GM10248 (cell line): ENCODE measurements at regions of chr20 and their contacts with region 1.

Region 1: DNA sequence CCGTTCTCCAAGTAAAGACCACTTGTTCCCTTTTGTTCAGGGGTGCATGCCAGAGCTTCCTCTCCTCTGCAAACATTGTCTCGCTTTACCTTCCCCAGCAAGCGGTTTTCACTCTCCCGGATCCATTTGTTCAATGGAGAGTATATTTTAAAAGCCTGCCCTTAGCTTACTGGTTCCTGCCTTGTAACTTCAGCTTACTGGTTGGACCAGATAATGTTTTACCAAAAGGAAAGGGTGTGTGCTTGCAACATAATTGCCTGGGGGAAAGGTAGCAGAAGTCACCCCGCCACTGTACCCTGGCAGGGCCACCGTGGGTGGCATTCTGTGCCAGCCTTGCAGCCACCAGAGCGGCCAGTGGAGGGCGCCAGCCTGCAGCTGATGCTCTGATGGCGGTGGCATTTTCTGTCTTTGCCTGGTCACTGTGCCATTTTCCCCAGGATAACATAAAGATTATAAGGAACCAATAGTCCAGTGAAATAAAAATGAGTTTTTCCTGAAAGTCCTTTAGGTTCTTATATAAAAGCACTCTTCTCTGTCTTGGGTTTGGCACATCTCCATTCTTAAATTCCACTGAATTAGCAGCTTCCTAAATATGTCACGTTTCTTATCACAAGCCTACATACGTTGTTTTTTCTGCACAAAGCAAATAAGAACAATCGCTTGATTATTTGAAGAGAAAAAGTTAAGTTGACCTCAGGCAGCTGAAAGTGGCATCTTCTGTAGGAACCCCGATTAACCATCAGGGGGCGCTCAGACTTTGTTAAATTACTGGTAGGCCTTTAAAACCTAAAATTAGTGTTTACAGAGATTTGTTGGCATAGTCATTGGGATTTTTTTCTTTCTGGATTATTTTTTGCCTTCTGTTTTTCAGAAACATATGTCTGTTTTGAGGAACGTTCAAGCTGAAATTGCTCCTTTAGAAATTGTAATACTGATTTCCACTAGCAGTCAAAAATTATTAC is 67.4 kb upstream of the XRN2 start:
- DNase-seq: peak; percentile 59
- CTCF ChIP-seq: peak; percentile 91

Region 2: DNA sequence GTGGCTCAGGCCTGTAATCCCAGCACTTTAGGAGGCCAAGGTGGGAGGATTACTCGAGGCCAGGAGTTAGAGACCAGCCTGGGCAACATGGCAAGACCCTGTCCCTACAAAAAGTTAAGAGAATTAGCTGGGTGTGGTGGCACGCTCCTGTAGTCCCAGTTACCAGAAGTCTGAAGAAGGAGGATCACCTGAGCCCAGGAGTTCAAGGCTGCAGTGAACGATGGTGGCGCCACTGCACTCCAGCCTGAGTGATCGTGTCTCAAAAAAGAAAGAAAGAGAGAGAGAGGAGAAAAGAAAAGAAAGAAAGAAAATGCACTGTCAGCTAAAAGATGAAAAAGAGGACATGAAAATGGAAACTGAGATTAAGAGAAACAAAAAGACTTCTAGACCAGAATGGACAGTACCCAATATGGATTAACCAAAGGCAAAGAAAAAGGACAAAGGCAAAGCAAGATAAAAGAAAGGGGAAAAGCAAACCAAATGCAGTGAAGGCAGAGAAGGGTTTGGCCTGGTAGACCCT is 514.3 kb before region 1 on chr20:
- CTCF ChIA-PET with region 1: no interaction called
- POLR2A ChIA-PET with region 1: no interaction called
- DNase-seq: no peak
- CTCF ChIP-seq: no peak

Region 3: DNA sequence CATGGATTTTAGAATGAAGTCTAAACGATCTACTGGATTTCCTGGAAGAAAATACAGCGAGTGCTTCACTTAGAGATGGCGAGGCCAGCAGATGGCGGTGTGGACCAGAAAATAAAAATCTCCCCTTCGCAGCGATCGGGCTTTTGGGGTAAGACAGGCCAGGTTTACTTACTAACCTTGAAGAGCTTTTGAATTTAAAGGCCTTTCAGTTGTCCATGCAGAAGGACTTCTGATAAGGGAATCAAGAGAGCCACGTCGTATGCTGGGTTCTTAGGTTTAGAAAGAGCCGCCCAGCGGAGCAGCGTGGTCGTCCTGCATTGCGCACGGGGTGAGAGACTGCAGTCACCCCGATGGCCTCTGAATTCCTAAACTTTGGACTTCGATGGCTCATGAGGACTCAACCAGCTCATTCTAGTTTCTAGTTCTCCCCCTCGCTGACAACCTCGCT is 398.2 kb before region 1 on chr20:
- CTCF ChIA-PET with region 1: interaction called, 11 read pairs
- POLR2A ChIA-PET with region 1: no interaction called
- DNase-seq: peak; percentile 58
- CTCF ChIP-seq: peak; percentile 64

Region 4: DNA sequence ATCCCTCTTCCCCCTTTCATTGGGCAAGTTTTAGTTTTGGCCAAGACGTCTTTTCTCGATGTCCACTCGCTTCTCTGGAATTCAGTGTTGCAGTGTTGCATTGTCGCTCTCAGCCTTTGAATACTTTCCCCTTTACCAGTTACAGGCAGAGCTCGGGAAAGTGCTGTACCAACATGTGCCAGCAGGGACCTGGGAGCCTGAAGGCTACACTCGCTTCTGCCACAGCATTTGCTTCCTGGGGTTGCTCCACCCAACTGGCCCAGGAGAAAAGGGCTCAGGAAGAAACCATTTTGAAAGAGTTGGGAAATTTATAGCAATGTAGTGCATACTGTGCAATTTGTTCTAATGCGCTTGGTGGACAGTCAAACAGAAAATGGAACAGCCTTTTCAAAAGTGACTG is 208.2 kb before region 1 on chr20:
- CTCF ChIA-PET with region 1: no interaction called
- POLR2A ChIA-PET with region 1: no interaction called
- DNase-seq: no peak
- CTCF ChIP-seq: no peak

Region 5: GRCh38 chr20:21214431-21214830 is 21.3 kb before region 1 on chr20:
- CTCF ChIA-PET with region 1: interaction called, 24 read pairs
- POLR2A ChIA-PET with region 1: no interaction called
- DNase-seq: no peak
- CTCF ChIP-seq: no peak

Region 6: GRCh38 chr20:21246161-21246560 is 10.4 kb after region 1 on chr20:
- CTCF ChIA-PET with region 1: interaction called, 40 read pairs
- POLR2A ChIA-PET with region 1: no interaction called
- DNase-seq: no peak
- CTCF ChIP-seq: no peak

Region 7: DNA sequence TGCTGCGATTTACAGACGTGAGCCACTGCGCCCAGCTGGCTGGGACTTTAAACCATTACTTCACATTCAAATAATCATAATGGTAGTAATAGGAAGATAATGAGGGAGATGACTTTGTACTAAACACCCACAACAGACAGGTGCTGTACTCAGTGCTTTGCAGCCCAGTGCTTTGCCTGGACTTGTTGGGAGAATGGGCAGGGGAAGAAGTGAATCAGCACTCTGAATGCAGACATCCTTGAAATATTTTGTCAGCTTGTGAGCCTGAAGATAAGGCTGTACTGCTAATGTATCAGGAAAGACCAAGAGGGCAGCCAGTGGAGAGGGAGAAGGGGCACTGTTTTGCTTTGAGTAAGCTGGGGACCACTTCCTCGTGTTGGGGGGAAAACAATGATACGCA is 260.7 kb after region 1 on chr20:
- CTCF ChIA-PET with region 1: interaction called, 293 read pairs
- POLR2A ChIA-PET with region 1: no interaction called
- DNase-seq: no peak
- CTCF ChIP-seq: no peak

Region 8: GRCh38 chr20:21564127-21564773 is 328.5 kb after region 1 on chr20:
- CTCF ChIA-PET with region 1: interaction called, 10 read pairs
- POLR2A ChIA-PET with region 1: no interaction called
- DNase-seq: no peak
- CTCF ChIP-seq: no peak

Region 9: GRCh38 chr20:21577551-21577950 is 341.8 kb after region 1 on chr20:
- CTCF ChIA-PET with region 1: interaction called, 26 read pairs
- POLR2A ChIA-PET with region 1: no interaction called
- DNase-seq: no peak
- CTCF ChIP-seq: no peak

Region 10: DNA sequence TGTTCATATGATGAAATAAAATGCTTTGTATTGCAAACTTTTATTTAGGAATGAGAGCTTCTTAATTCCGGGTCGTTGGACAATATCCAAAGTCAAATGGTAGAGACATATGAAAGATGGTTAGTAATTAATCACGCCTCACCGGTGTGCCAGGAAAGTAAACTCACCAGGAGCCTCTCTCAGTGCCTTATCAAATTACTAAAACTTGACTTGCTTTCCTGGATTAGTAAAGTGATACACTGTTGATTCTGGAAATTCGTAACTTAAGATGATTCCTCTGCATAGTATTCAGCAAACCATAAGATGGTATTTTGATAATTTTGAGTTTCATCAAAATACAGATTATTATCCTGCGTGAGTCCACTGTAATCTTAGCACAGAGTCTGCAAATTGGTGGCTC is 584.9 kb after region 1 on chr20:
- CTCF ChIA-PET with region 1: no interaction called
- POLR2A ChIA-PET with region 1: no interaction called
- DNase-seq: no peak
- CTCF ChIP-seq: no peak